ENCODE measurements at regions of chr17 and their contacts with region 1.

Region 1: DNA sequence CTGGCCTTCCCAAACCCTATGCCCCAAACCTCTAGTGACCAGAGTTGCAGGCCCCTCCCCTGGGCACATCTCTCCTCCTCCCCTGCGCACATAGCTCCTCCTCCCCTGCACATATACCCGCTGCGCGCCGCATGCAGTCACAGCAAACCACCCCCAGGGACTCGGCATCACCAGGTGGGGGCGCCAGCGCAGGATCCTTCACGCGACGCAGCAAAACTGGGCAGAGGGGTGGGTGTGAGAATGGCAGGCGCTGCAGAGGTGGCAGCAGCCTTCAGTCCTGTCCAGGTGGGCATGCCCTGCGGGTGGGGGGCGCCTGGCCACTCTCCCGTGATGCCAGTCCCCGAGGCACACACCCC is 5.6 kb downstream of the CORO6 start:
- DNase-seq: peak; percentile 86
- H3K4me3 ChIP-seq: peak overlapping the region in 1 of 3 experiments; percentile 2
- H3K27ac ChIP-seq: no peak overlapping the region
- H3K4me1 ChIP-seq: peaks cover 33% of the 10 kb centered on the region
- H3K27me3 ChIP-seq: no peaks in the 10 kb centered on the region
- CTCF ChIP-seq: peak; percentile 91 to 94
- POLR2A ChIP-seq: no peak

Region 2: DNA sequence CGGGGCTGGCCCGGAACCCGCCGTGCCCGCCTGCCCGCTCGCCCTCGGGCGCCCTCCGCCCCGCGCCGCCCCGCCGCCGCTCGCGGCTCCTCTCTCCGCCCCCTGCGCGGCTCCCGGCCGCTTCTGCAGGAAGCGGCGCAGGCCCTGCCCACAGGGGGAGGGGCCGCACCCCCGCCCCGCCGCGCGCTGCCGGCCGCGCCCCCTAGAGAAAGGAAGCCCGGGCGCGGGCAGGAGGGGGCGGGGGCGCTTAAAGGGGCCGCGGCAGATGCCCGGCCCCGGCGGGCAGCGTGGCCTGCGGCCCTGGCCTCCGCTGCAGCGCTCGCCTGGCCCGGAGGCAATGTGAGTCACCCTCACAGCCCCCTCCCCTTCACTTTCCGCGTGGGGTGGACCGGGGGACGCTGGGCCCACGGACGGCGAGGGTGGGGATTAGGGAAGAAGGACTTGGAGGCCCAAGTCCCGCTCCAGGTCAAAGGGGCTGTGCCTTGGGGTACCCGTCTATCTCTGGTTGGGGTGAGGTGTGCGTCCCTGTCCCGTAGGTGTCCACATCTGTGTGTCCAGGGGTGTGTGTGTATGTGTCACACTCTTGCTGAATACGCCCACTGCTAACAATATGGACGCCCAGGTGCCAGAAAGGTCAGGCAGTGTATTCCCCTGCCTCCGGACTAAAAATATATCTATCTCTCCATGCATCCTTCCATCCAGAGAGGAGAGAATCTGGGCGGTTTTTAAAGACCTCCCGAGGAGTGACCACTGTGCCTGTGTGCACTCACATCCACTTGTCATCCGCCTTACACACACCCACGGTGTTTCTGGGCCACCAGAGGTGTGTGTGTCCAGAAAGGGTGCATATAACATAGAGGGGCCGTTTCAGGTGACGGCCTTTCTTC is 27.3 kb before region 1 on chr17 and contains the start of gene GIT1:
- CTCF ChIA-PET with region 1: interaction called, 120 read pairs
- POLR2A ChIA-PET with region 1: no interaction called
- dilution Hi-C with region 1: no loop called
- intact Hi-C with region 1: loop called (anchors 1 kb)
- DNase-seq: peak; percentile 82
- H3K4me3 ChIP-seq: peak within 1 kb of the TSS; percentile 58 to 69 (median 68)
- H3K27ac ChIP-seq: peak within 1 kb of the TSS; percentile 66
- H3K4me1 ChIP-seq: peaks cover 76% of the 10 kb centered on the region
- H3K27me3 ChIP-seq: no peaks in the 10 kb centered on the region
- CTCF ChIP-seq: no peak
- POLR2A ChIP-seq: peak; percentile 75
- total RNA-seq, gene GIT1: 82.0 and 92.5 TPM in 2 replicates

Region 3: GRCh38 chr17:29653995-29654714 is 37.1 kb after region 1 on chr17:
- CTCF ChIA-PET with region 1: interaction called, 16 read pairs
- POLR2A ChIA-PET with region 1: no interaction called
- dilution Hi-C with region 1: no loop called
- intact Hi-C with region 1: no loop called
- DNase-seq: no peak
- H3K4me3 ChIP-seq: no peak overlapping the region
- H3K27ac ChIP-seq: no peak overlapping the region
- H3K4me1 ChIP-seq: no peaks in the 10 kb centered on the region
- H3K27me3 ChIP-seq: no peaks in the 10 kb centered on the region
- CTCF ChIP-seq: no peak
- POLR2A ChIP-seq: no peak

Region 4: GRCh38 chr17:29674281-29674680 is 57.2 kb after region 1 on chr17:
- CTCF ChIA-PET with region 1: no interaction called
- POLR2A ChIA-PET with region 1: no interaction called
- dilution Hi-C with region 1: no loop called
- intact Hi-C with region 1: no loop called
- DNase-seq: peak; percentile 44
- H3K4me3 ChIP-seq: no peak overlapping the region
- H3K27ac ChIP-seq: no peak overlapping the region
- H3K4me1 ChIP-seq: no peaks in the 10 kb centered on the region
- H3K27me3 ChIP-seq: no peaks in the 10 kb centered on the region
- CTCF ChIP-seq: no peak
- POLR2A ChIP-seq: no peak

Region 5: DNA sequence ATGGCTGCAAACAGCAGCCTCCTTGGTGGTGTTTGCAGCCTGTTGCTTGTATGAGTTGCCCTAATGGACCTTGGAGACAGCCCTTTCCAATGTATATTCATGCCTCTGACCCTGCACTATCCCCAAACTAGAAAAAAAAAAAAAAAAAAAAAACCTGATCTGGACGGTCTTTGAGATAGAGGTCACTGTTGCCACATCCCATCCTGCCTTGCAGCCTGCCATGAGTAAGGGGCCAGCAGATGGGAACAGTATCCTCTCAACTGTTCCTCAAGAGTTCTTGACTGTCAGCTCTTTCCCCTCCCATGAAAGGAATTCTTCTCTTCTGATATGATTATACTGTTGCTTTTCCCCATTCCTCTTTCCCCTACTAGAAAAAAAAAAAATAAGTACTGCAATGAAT is 160.6 kb after region 1 on chr17:
- CTCF ChIA-PET with region 1: interaction called, 90 read pairs
- POLR2A ChIA-PET with region 1: interaction called, 3 read pairs
- dilution Hi-C with region 1: no loop called
- intact Hi-C with region 1: loop called (anchors 1 kb)
- DNase-seq: no peak
- H3K4me3 ChIP-seq: no peak overlapping the region
- H3K27ac ChIP-seq: no peak overlapping the region
- H3K4me1 ChIP-seq: peaks cover 6% of the 10 kb centered on the region
- H3K27me3 ChIP-seq: no peaks in the 10 kb centered on the region
- CTCF ChIP-seq: no peak
- POLR2A ChIP-seq: no peak

Region 6: GRCh38 chr17:30021708-30022317 is 404.7 kb after region 1 on chr17:
- CTCF ChIA-PET with region 1: interaction called, 30 read pairs
- POLR2A ChIA-PET with region 1: no interaction called
- dilution Hi-C with region 1: no loop called
- intact Hi-C with region 1: loop called (anchors 2 kb)
- DNase-seq: peak; percentile 71
- H3K4me3 ChIP-seq: no peak overlapping the region
- H3K27ac ChIP-seq: no peak overlapping the region
- H3K4me1 ChIP-seq: peaks cover 2% of the 10 kb centered on the region
- H3K27me3 ChIP-seq: no peaks in the 10 kb centered on the region
- CTCF ChIP-seq: peak; percentile 58 to 59
- POLR2A ChIP-seq: no peak

Measured in endothelial cell of umbilical vein (primary cell).